ENCODE measurements at regions of chr11 and their contacts with region 1.

Region 1: DNA sequence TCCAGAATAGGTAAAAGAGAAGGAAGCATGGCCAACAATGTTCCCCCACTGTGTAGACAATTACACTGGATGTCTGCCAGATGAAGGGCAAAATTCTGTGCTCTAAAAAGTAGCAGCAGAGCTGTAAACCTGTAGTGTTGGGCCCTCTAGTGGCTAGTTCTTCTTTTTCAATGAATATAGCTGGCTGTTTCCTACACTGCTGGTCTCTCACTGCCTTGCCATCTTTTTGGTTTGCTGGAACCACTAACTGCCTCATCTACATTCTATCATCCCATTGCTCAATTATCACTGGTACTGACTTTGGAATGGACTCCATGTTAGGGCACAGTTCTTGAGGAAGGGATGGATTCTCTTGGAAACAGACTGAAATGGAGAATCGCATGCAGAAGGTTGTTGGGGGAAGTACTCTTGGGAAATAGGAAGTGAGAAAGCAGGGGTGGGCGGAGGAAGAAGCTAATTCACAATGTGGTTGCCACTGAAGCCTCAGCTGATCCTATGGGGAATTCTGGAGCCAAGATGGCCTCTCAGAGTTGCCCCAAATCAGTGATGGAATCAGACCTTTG is 17.9 kb downstream of the KCNE3 start:
- DNase-seq: peak; percentile 47
- ATAC-seq: peak; percentile 94
- H3K4me3 Mint-ChIP-seq: no peak overlapping the region
- H3K27ac Mint-ChIP-seq: no peak overlapping the region
- H3K4me1 Mint-ChIP-seq: peaks cover 4% of the 10 kb centered on the region
- H3K27me3 Mint-ChIP-seq: peaks cover 6% of the 10 kb centered on the region

Region 2: DNA sequence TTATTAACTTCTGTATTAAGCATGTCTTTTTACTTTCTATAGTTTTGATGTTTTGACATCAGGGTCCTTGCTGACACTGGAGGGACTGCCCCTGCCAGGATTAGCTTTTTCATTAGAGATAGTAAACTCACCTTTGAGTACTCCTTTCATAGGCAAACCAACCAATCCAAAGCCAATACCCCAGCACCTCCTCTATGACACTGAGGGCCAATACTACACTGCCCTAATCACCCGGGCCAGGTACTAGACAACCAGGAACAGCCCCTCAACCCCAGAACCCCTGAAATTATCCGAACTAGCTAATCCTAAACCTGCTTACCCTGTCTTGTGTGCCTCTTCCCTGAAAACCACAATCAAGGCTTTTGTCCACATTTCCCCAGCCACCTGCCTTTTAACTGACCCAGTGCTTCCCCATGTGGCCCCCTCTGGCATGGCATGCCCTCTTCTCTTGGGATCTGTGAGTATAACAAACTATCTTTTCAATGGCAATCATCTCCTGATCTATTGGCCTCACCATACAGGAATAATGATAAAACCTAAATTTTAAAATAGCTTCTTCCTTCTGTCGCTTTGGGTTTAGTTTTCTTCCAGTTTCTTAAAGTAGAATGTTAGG is 719.8 kb before region 1 on chr11:
- CTCF ChIA-PET with region 1: no interaction called
- POLR2A ChIA-PET with region 1: no interaction called
- intact Hi-C with region 1: no loop called
- DNase-seq: peak; percentile 36
- ATAC-seq: no peak
- H3K4me3 Mint-ChIP-seq: no peak overlapping the region
- H3K27ac Mint-ChIP-seq: no peak overlapping the region
- H3K4me1 Mint-ChIP-seq: peaks cover 36% of the 10 kb centered on the region
- H3K27me3 Mint-ChIP-seq: no peaks in the 10 kb centered on the region

Region 3: DNA sequence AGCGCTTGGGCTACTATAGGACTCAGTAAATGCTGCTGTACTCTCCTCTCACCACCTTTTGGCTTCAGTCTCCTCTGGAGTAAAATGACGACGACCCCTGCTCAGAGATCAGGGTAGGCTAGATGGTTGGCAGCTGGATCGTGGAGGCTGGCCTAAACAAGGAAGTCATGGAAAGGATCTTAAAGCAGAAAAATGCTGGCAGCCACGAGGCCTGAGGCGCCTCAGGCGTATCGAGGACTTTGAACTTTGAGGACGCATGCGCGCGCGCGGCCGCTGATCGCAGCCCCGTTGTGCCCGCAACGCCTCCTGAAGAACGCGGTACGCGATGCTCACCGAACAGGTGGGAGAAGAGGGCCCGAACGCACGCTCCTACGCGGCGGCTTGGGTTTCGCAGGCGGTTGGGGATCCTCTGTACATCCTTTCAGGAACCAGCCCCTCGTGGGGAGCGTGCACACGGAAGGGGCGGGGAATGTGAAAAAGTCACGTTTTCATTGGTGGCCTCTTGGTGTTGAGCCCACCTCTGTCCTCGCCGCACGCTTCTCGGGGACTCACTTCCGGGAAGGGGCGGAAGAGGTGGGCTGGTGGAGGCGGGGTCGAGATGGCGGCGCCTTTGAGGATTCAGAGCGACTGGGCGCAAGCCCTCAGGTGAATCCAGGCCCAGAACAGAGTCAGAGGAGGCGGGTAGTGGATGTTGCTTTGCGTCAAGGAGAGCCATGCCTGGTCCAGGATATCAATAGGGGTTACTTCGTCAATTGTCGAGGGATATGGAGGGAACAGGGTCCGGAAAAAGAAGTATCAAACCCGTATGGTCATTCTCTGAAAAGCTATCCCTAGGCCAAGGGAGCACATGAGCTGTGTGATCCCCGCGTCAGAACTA is 572.8 kb before region 1 on chr11 and contains the starts of genes COA4 and PAAF1:
- CTCF ChIA-PET with region 1: no interaction called
- POLR2A ChIA-PET with region 1: no interaction called
- intact Hi-C with region 1: no loop called
- DNase-seq: peak; percentile 97
- ATAC-seq: peak; percentile 95
- H3K4me3 Mint-ChIP-seq: peak within 1 kb of the TSS; percentile 93
- H3K27ac Mint-ChIP-seq: peak within 1 kb of the TSS; percentile 100
- H3K4me1 Mint-ChIP-seq: peaks cover 32% of the 10 kb centered on the region
- H3K27me3 Mint-ChIP-seq: no peaks in the 10 kb centered on the region
- total RNA-seq, gene COA4: 103 to 112 TPM
- total RNA-seq, gene PAAF1: 34.2 to 34.8 TPM

Region 4: GRCh38 chr11:74255741-74256369 is 193.6 kb before region 1 on chr11:
- CTCF ChIA-PET with region 1: interaction called, 49 read pairs
- POLR2A ChIA-PET with region 1: interaction called, 3 read pairs
- intact Hi-C with region 1: loop called (anchors 1 kb)
- DNase-seq: peak; percentile 70
- ATAC-seq: peak; percentile 84
- H3K4me3 Mint-ChIP-seq: no peak overlapping the region
- H3K27ac Mint-ChIP-seq: no peak overlapping the region
- H3K4me1 Mint-ChIP-seq: no peaks in the 10 kb centered on the region
- H3K27me3 Mint-ChIP-seq: no peaks in the 10 kb centered on the region

Region 5: GRCh38 chr11:74373382-74373781 is 76.1 kb before region 1 on chr11:
- CTCF ChIA-PET with region 1: interaction called, 10 read pairs
- POLR2A ChIA-PET with region 1: no interaction called
- intact Hi-C with region 1: no loop called
- DNase-seq: no peak
- ATAC-seq: no peak
- H3K4me3 Mint-ChIP-seq: no peak overlapping the region
- H3K27ac Mint-ChIP-seq: no peak overlapping the region
- H3K4me1 Mint-ChIP-seq: no peaks in the 10 kb centered on the region
- H3K27me3 Mint-ChIP-seq: no peaks in the 10 kb centered on the region

Region 6: DNA sequence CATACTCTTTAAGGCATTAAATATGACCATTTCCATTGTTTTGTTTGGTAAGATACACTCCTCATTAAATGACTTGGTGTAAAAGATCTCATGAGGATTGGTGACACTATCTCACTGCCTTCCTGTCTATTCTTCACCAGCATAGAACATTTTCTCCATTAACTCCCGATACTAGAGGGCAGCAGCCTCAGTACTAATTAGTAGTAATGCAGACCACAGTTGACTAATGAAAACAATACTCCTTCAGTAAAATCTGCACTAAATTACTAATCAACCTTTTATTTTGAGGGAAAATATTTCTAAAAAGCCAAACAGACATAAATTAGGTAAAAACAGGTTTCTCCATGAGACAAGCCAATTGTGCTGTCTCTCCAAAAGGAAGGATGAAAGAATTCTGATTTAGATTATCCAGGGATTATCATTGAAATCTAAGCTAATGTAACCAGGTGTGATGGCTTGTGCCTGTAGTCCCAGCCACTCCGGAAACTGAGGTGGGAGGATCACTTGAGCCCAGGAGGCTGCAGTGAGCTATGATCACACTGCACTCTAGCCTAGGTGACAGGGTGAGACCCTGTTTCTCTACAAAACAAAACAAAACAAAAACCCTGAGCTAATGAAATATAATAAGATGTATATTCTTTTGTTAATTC is 60.6 kb before region 1 on chr11:
- CTCF ChIA-PET with region 1: interaction called, 102 read pairs
- POLR2A ChIA-PET with region 1: interaction called, 3 read pairs
- intact Hi-C with region 1: loop called (anchors 1 kb)
- DNase-seq: peak; percentile 81
- ATAC-seq: peak; percentile 81
- H3K4me3 Mint-ChIP-seq: no peak overlapping the region
- H3K27ac Mint-ChIP-seq: peak overlapping the region; percentile 75
- H3K4me1 Mint-ChIP-seq: peaks cover 41% of the 10 kb centered on the region
- H3K27me3 Mint-ChIP-seq: no peaks in the 10 kb centered on the region

Region 7: DNA sequence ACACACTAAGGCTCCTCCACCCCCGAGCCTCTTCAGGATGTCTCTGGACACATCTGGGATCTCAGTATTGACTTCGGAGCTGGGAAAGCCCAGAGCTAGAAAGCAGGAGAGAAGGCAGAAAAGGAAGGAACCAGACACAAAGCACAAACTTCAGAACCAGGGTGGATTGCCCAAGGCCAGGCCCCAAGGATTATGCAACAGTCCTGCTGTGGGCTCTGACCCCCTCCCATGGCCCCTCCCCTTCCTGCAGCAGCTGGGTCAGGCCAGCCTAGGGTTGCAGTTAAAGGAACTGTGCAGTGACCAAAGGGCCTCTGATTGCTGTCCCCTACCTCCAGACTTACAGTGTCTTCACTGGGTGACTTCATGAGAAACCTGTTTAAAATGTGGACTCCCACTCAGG is 12.6 kb after region 1 on chr11:
- CTCF ChIA-PET with region 1: interaction called, 29 read pairs
- POLR2A ChIA-PET with region 1: no interaction called
- intact Hi-C with region 1: no loop called
- DNase-seq: no peak
- ATAC-seq: no peak
- H3K4me3 Mint-ChIP-seq: no peak overlapping the region
- H3K27ac Mint-ChIP-seq: no peak overlapping the region
- H3K4me1 Mint-ChIP-seq: peaks cover 4% of the 10 kb centered on the region
- H3K27me3 Mint-ChIP-seq: peaks cover 24% of the 10 kb centered on the region

Region 8: GRCh38 chr11:74641289-74641688 is 191.8 kb after region 1 on chr11:
- CTCF ChIA-PET with region 1: no interaction called
- POLR2A ChIA-PET with region 1: no interaction called
- intact Hi-C with region 1: no loop called
- DNase-seq: no peak
- ATAC-seq: no peak
- H3K4me3 Mint-ChIP-seq: no peak overlapping the region
- H3K27ac Mint-ChIP-seq: no peak overlapping the region
- H3K4me1 Mint-ChIP-seq: peaks cover 7% of the 10 kb centered on the region
- H3K27me3 Mint-ChIP-seq: no peaks in the 10 kb centered on the region

Region 9: GRCh38 chr11:74726547-74727182 is 277.2 kb after region 1 on chr11:
- CTCF ChIA-PET with region 1: interaction called, 5 read pairs
- POLR2A ChIA-PET with region 1: no interaction called
- intact Hi-C with region 1: loop called in 1 of 2 experiments (anchors 2 kb)
- DNase-seq: peak; percentile 78
- ATAC-seq: peak; percentile 96
- H3K4me3 Mint-ChIP-seq: no peak overlapping the region
- H3K27ac Mint-ChIP-seq: no peak overlapping the region
- H3K4me1 Mint-ChIP-seq: peaks cover 5% of the 10 kb centered on the region
- H3K27me3 Mint-ChIP-seq: peaks cover 34% of the 10 kb centered on the region

Region 10: DNA sequence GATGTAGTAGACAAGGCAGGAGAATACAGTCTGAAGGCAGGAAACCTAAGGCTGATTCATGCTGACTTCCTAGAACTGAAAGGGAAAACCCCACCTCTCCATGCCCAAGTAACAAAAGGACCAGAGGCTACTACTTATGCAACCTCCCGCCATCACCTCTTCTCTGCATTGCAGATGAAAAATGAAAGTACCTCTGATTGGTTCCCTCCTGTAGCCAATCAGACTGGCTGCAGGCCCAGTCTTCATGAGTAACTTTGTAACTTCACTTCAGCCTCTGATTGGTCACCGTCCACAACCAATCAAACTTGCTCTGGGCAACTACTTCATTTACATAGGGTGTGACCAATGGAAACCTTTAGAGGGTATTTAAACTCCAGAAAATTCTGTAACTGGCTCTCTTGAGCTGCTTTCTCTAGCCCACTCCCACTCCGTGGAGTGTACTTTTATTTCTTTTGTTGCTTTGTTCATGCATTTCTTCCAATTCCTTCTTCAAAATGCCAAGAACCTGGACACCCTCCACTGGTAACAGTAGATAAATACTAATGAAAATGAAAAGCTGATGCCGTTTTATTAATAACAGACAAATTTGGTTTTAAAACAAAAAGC is 1224.6 kb after region 1 on chr11:
- CTCF ChIA-PET with region 1: no interaction called
- POLR2A ChIA-PET with region 1: no interaction called
- intact Hi-C with region 1: no loop called
- DNase-seq: peak; percentile 67
- ATAC-seq: peak; percentile 93
- H3K4me3 Mint-ChIP-seq: no peak overlapping the region
- H3K27ac Mint-ChIP-seq: no peak overlapping the region
- H3K4me1 Mint-ChIP-seq: peaks cover 14% of the 10 kb centered on the region
- H3K27me3 Mint-ChIP-seq: peaks cover 51% of the 10 kb centered on the region